GM10248 (cell line): ENCODE measurements at regions of chr7 and their contacts with region 1.

Region 1: GRCh38 chr7:106153891-106154449 is 41.9 kb upstream of the SYPL1 start:
- DNase-seq: peak; percentile 81
- CTCF ChIP-seq: peak; percentile 94

Region 2: DNA sequence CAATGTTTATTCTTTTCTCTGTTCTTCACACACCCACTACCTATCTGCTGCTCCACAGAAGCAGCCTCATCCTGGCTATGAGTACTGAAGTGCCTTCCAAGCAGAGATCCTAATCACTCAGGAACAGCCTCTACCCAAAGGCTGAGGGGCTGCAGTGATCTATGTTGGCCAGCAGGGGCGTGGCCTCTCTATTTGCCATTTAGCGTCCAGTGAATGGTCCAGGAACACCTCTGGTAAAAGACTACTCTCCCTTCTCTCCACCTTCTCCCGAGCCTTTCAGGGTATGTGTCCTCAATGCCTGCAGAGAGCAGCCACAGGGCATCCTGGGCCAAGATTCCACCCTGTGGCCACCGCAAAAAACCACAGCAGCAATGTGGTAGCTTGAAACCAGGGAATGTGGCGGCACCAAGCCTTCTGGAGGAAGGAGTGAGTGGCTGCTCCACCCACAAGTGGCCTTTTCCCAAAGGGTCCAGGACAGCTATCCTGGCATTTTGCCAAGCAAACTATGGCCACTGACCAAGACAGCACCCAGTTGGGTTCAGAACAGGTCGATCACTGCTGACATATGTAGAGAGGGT is 112.7 kb before region 1 on chr7:
- CTCF ChIA-PET with region 1: interaction called, 42 read pairs
- POLR2A ChIA-PET with region 1: no interaction called
- DNase-seq: peak; percentile 66
- CTCF ChIP-seq: peak; percentile 58

Region 3: GRCh38 chr7:106056513-106057203 is 97.3 kb before region 1 on chr7:
- CTCF ChIA-PET with region 1: interaction called, 163 read pairs
- POLR2A ChIA-PET with region 1: no interaction called
- DNase-seq: peak; percentile 82
- CTCF ChIP-seq: peak; percentile 94

Region 4: DNA sequence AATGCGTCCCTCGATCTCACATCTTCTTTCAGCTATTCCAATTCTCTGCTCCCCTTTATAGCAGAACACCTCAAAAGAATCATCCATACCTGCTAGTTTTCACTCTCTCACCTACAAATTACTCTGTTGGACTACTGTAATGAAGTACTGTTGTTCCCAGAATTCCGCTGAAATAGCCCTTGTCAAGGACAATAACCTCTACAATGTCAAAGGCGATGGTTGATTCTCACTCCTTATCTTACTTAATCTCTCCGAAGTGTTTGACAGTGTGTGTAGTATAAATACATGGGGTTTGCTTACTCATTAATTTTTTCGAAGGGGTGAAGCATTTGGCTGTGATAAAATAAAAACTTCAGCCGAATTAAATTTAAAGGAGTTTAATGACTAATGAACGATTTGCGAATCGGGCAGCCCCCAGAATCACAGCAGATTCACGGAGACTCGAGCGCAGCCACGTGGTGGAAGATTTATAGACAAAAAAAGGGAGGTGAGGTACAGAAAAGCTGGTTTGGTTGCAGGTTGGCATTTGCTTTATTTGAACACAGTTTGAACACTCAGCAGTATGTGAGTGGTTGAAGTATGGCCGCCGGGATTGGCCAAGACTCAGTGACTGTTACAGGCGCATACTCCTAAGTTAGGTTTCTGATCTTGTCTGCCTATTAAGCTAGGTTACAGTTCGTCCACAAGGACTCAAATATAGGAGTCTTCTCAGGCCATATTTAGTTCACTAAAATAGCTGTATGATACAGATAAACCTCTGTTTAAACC is 71.7 kb before region 1 on chr7:
- CTCF ChIA-PET with region 1: interaction called, 12 read pairs
- POLR2A ChIA-PET with region 1: no interaction called
- DNase-seq: no peak
- CTCF ChIP-seq: no peak

Region 5: DNA sequence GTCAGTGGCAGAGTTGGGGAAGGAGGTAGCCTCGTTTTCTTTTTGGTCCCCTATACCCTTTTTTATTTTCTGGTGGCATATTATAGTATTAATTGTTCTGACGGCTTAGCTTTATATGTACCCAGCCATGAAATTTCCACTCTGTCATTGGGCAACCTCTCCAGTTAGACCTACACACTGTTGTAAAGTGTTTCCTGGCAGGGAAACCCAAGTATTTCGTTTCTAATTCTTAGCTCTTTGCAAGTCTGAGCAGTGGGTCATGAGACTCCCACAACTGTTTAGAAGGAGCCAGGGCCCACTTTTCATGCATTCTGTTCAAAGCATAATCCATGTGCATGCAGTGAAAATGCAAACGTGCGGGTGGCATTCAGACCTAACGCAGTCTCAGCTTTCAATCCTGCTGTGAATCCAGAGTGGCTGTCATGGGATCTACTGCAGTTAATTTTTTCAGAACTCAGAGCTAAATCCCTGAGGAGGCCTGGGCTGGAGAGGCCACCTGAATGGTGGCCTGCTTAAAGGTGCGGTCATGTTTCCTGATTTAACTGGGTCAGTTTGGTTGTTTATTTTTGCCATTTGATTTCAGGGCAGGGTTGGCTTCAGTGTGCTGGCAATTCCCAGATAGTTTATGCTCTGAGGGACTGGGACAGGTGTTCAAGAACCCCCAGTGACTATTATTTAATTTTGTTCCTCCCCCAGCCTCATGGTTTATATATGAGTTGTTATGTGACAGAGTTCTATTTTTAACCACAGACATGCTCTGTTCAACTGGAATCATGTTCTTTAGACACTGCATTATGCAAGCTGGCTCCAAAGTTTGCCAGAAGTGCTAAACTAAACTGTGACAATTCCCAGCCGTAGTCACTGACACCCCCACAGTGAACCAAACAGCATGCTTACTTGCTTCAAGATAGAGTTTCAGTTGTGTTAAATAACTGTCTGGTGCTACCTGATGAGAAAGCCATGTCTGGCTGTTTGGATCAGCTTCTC is 14.4 kb before region 1 on chr7:
- CTCF ChIA-PET with region 1: interaction called, 16 read pairs
- POLR2A ChIA-PET with region 1: interaction called, 4 read pairs
- DNase-seq: no peak
- CTCF ChIP-seq: no peak